ENCODE measurements at regions of chr13 and their contacts with region 1.

Region 1: GRCh38 chr13:51419001-51419636 is 33.7 kb downstream of the INTS6 start:
- DNase-seq: no peak
- H3K4me3 ChIP-seq: no peak overlapping the region
- H3K27ac ChIP-seq: no peak overlapping the region
- H3K4me1 ChIP-seq: peaks cover 6% of the 10 kb centered on the region
- H3K27me3 ChIP-seq: no peaks in the 10 kb centered on the region
- CTCF ChIP-seq: no peak

Region 2: GRCh38 chr13:51405176-51405575 is 13.9 kb before region 1 on chr13:
- CTCF ChIA-PET with region 1: interaction called, 15 read pairs
- POLR2A ChIA-PET with region 1: no interaction called
- intact Hi-C with region 1: no loop called
- DNase-seq: no peak
- H3K4me3 ChIP-seq: no peak overlapping the region
- H3K27ac ChIP-seq: no peak overlapping the region
- H3K4me1 ChIP-seq: no peaks in the 10 kb centered on the region
- H3K27me3 ChIP-seq: no peaks in the 10 kb centered on the region
- CTCF ChIP-seq: no peak

Region 3: GRCh38 chr13:52846567-52847321 is 1427.6 kb after region 1 on chr13:
- CTCF ChIA-PET with region 1: no interaction called
- POLR2A ChIA-PET with region 1: interaction called, 10 read pairs
- intact Hi-C with region 1: no loop called
- DNase-seq: no peak
- H3K4me3 ChIP-seq: no peak overlapping the region
- H3K27ac ChIP-seq: no peak overlapping the region
- H3K4me1 ChIP-seq: no peaks in the 10 kb centered on the region
- H3K27me3 ChIP-seq: peaks cover 17% of the 10 kb centered on the region; the same call in 1 of the 2 replicates
- CTCF ChIP-seq: no peak

Measured in PC-9 (cell line).